ENCODE measurements at regions of chr7 and their contacts with region 1.

Region 1: GRCh38 chr7:112449902-112450806 is at the start of gene IFRD1:
- DNase-seq: peak; percentile 97
- H3K4me3 Mint-ChIP-seq: peak within 1 kb of the TSS; percentile 92
- H3K27ac Mint-ChIP-seq: peak within 1 kb of the TSS; percentile 94
- H3K4me1 Mint-ChIP-seq: peaks cover 47% of the 10 kb centered on the region
- H3K27me3 Mint-ChIP-seq: no peaks in the 10 kb centered on the region
- total RNA-seq, gene IFRD1: 88.3 and 97.1 TPM in 2 replicates

Region 2: DNA sequence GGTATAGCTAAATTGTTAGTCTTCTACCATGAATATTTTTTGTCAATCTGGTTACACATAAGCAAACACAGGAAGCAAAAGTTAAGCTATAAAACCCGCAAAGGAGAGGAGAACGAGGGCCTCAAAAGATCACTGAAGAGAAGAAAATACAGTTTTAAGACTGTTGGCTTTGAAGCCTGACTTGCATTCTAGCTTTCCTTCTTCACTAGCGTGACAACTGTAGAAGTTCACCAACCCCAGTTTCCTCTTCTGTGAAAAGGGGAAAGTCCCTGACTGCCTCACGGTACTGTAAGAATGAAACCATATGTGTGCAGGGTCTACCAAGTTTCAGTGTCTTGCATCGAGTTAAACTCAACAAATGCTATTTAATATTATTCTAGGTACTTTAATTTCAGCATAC is 1366.7 kb before region 1 on chr7:
- intact Hi-C with region 1: loop called (anchors 5 kb)
- DNase-seq: peak; percentile 74
- H3K4me3 Mint-ChIP-seq: peak overlapping the region; percentile 59
- H3K27ac Mint-ChIP-seq: peak overlapping the region; percentile 82
- H3K4me1 Mint-ChIP-seq: peaks cover 84% of the 10 kb centered on the region
- H3K27me3 Mint-ChIP-seq: no peaks in the 10 kb centered on the region

Region 3: GRCh38 chr7:111763221-111763801 is 686.8 kb before region 1 on chr7:
- intact Hi-C with region 1: no loop called
- DNase-seq: no peak
- H3K4me3 Mint-ChIP-seq: no peak overlapping the region
- H3K27ac Mint-ChIP-seq: no peak overlapping the region
- H3K4me1 Mint-ChIP-seq: no peaks in the 10 kb centered on the region
- H3K27me3 Mint-ChIP-seq: peaks cover 5% of the 10 kb centered on the region

Region 4: DNA sequence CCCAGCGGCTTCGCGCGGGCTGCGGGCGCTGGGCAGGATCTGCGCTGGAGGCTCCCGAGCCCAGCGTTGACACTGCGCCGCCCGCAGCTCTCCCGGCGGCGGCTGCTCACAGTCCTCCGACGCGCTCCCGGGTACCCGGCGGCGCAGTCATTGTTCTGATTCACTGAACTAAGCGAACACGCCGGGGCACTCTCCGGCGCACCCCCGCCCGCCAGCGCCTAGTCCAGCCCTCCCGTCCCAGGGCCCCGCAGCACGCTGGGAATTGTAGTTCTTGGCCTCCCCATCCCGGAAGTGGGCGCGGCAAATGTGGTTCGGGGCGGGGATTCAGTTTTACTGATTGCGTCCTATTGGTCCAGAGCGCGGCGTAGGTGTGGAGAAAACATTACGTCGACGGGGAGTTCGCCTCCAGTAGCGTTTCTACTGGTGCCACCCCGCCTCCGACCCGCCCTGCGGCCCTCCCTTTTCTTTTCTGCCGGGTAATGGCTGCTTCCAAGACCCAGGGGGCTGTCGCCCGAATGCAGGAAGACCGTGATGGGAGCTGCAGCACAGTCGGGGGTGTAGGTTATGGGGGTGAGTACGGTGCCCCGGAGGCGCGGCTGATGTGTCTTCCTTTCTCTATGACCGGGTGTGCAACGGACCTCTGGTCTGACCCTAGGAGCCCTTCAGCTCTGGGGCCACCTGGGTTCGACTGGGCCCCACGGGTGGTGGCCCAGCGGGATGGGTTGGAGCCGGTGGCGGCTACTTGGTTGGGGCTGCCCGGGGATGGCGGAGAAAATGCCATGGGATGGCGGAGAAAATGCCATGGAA is 243.7 kb before region 1 on chr7 and contains the starts of genes DOCK4 and ZNF277:
- intact Hi-C with region 1: loop called (anchors 1 kb)
- DNase-seq: peak; percentile 98
- H3K4me3 Mint-ChIP-seq: peak within 1 kb of the TSS; percentile 100
- H3K27ac Mint-ChIP-seq: peak within 1 kb of the TSS; percentile 92
- H3K4me1 Mint-ChIP-seq: peaks cover 34% of the 10 kb centered on the region
- H3K27me3 Mint-ChIP-seq: peaks cover 31% of the 10 kb centered on the region
- total RNA-seq, gene DOCK4: 0.31 and 0.37 TPM in 2 replicates
- total RNA-seq, gene ZNF277: 12.1 and 14.0 TPM in 2 replicates

Region 5: DNA sequence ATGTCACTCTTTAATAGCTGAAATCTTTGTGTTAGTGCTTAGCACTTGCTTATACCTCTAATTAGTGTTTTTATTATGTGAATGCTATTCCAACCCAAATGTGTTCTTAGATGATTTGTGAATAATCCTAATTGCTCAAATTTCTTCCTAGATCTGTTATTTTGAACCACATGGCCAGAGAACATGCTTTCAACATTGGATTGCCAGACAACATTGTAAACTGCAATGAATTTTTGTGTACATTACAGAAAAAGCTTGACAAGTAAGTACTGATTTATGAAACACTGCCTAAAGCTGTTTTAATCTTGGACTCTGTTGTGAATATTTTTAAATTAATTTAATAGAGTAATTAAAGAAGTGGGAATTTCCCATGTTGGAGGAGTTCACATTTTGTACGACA is 122.6 kb before region 1 on chr7:
- intact Hi-C with region 1: no loop called
- DNase-seq: no peak
- H3K4me3 Mint-ChIP-seq: no peak overlapping the region
- H3K27ac Mint-ChIP-seq: no peak overlapping the region
- H3K4me1 Mint-ChIP-seq: no peaks in the 10 kb centered on the region
- H3K27me3 Mint-ChIP-seq: no peaks in the 10 kb centered on the region

Region 6: GRCh38 chr7:112430649-112431048 is 19.5 kb before region 1 on chr7:
- intact Hi-C with region 1: no loop called
- DNase-seq: no peak
- H3K4me3 Mint-ChIP-seq: no peak overlapping the region
- H3K27ac Mint-ChIP-seq: no peak overlapping the region
- H3K4me1 Mint-ChIP-seq: no peaks in the 10 kb centered on the region
- H3K27me3 Mint-ChIP-seq: peaks cover 2% of the 10 kb centered on the region

Region 7: DNA sequence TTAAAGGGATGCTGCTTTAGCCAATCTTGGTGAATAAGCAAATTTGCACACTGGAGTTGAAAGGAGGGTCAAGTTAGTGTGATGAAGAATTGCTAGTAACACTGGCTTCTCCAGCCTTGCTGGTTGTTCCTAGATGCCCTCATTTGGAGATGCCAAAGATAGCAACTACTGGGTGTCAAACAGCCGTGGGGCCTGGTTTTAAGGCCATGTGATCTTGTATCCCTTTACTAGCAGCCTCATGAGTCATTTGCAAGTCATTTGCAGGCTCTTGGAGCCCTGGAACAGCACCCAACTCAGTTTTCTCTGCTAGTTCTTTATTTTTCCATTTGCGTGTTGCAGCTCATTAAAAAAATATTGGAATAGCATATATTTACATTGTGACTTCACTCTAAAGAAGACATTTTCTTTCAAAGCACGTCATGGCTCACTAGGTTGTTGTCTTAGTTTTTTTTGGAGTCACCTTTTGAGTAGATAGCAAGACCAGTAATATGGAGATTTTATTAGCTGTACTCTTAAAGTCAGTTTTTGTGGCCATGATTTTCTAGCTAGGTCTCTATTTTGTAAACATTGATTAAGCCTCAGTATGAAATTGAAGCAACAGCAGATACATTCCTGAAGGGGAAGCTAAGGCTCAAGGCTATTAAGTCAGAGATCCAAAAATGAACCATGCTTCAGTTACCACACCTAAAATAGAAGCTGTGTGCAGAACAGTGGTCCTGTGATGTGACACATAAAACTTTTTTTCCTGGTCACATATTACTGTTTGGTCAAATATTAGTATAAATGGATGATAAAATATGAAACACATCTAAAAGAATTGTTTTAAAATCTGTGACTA is 31.9 kb after region 1 on chr7:
- intact Hi-C with region 1: loop called (anchors 2 kb)
- DNase-seq: no peak
- H3K4me3 Mint-ChIP-seq: no peak overlapping the region
- H3K27ac Mint-ChIP-seq: no peak overlapping the region
- H3K4me1 Mint-ChIP-seq: peaks cover 12% of the 10 kb centered on the region
- H3K27me3 Mint-ChIP-seq: no peaks in the 10 kb centered on the region

Region 8: DNA sequence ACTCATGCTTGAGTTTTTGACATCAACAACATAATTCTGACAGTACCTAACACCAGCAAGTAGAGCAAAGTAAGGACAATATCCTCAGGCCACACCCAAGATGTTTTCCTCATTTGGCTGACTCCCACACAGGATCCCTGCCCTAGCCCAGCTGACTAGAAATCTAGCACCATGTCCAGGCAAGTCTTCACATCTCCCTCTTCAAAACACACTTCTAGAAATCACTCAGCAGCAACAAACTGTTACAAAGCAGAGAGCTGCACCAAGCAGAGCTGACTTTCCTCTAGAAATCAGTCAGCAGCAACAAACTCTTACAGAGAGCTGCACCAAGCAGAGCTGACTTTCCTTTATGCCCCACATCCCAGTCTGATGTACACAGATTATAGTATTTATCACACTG is 332.3 kb after region 1 on chr7:
- intact Hi-C with region 1: loop called (anchors 5 kb)
- DNase-seq: no peak
- H3K4me3 Mint-ChIP-seq: no peak overlapping the region
- H3K27ac Mint-ChIP-seq: peak overlapping the region; percentile 32
- H3K4me1 Mint-ChIP-seq: peaks cover 23% of the 10 kb centered on the region
- H3K27me3 Mint-ChIP-seq: no peaks in the 10 kb centered on the region

Region 9: DNA sequence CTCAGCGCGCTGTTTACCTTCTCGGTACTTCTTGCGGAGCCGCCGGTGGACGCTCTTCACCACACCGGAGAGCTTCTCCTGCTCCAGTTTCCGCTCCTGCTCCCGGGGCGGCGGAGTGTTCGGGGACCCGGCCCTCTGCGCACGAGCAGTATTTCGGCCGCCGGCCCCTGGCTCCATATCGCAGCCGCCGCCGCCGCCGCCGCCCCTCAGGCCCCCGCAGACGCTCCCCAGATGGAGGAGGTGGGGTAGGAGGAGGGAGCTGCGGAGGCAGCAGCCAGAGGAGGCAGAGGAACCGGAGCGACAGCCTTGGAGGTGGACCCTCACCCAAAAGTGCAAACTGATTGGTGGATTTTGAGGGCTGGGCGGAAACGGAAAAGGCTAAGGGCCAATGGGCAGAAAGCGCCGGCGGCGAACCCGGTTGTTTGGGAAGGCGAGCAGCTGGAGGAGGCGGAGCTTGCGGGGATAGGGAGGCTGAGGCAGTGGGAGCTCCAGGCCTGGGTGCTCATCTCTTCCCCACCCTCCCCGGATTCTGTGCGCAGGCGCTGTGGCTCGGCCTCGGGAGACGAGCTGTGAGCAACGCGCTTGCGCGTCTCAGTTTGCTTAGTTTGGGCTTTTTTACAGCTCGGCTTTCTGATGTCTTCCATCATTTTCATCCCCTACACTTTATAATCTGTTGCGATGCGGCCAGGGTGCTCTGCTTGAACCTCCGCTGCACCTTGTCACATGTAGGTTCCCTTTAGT is 489.6 kb after region 1 on chr7:
- intact Hi-C with region 1: loop called (anchors 1 kb)
- DNase-seq: peak; percentile 99
- H3K4me3 Mint-ChIP-seq: peak overlapping the region; percentile 91
- H3K27ac Mint-ChIP-seq: peak overlapping the region; percentile 95
- H3K4me1 Mint-ChIP-seq: peaks cover 39% of the 10 kb centered on the region
- H3K27me3 Mint-ChIP-seq: peaks cover 6% of the 10 kb centered on the region

Measured in activated T-helper 1 cell treated with anti-CD3 and anti-CD28 coated beads, Interleukin-12 subunit alpha, Interleukin-12 subunit beta, Interleukin-2, Interleukin-4 antibody, amounts not matched to agents 30 ng/mL and 10 ng/mL and 1 ng/mL, durations not matched to agents 14 hours and 24 hours and 36 hours (primary cell).